Gastrocnemius medialis (tissue), 4 donors: ENCODE measurements at regions of chr6 and their contacts with region 1.

Region 1: DNA sequence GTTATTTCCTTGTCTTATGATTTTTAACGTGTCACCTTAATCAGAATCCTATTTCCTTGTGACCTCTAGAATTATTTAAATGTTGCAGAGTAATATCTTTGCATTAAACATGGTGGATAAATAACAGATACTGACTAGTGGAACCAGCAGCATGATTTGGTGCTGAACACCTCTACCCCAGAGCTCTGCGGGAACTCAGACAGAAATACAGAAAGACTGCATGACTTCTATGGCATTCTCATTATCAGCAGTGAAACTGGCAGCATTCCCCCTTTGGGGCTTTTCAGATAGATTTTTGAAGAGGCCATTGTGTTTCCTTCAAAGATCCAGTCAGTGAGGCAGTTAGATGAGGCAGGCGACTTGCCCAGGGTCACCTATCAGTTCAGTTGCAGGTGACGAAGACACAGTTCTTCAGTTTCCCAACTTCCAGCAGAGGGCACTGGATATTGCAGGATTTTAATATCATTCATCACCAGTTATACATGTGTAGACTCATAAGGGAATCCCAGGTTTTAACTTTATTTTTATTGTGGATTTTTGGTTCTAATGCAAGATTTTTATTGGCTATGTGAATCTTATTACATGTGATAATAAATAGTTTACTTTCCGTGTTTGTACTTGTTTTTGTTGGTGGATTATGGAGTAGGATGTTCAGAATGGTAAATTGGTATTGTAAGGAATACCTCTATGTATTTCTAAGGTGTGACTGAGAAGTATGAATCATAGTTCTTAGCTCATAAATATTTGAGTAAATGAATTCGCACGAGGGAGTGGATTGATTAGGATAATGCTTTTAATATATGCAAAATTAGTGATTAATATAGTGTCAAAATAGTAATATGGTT is 81.3 kb downstream of the AFDN start:
- DNase-seq: no peak
- ATAC-seq: no peak
- H3K4me3 ChIP-seq: peak overlapping the region in 2 of 4 donors; percentile 28 to 33
- H3K27ac ChIP-seq: peak overlapping the region in 3 of 4 donors; percentile 64 to 68 (median 67)
- H3K4me1 ChIP-seq: peaks cover 0 to 10% of the 10 kb centered on the region in 2 donors
- H3K27me3 ChIP-seq: no peaks in the 10 kb centered on the region
- CTCF ChIP-seq: peak in 4 of 5 experiments; percentile 23 to 53 (median 36)
- POLR2A ChIP-seq: no peak

Region 2: GRCh38 chr6:167750956-167751386 is 157.1 kb before region 1 on chr6:
- in situ Hi-C with region 1: no loop called
- intact Hi-C with region 1: loop called (anchors 5 kb)
- DNase-seq: peak; percentile 47 to 68
- ATAC-seq: peak; percentile 82 to 98
- H3K4me3 ChIP-seq: no peak overlapping the region
- H3K27ac ChIP-seq: peak overlapping the region in 2 of 4 donors; percentile 63 to 75
- H3K4me1 ChIP-seq: peaks cover 7 to 12% of the 10 kb centered on the region in 2 donors
- H3K27me3 ChIP-seq: peaks cover 0 to 5% (median 0%) of the 10 kb centered on the region in 3 donors
- CTCF ChIP-seq: no peak
- POLR2A ChIP-seq: no peak

Region 3: GRCh38 chr6:167826230-167826895 is 81.7 kb before region 1 on chr6:
- in situ Hi-C with region 1: no loop called
- intact Hi-C with region 1: loop called (anchors 10 kb)
- DNase-seq: peak; percentile 49 to 50
- ATAC-seq: peak; percentile 69 to 81
- H3K4me3 ChIP-seq: peak overlapping the region; percentile 63 to 81 (median 79)
- H3K27ac ChIP-seq: peak overlapping the region in 3 of 4 donors; percentile 38 to 58 (median 56)
- H3K4me1 ChIP-seq: peaks cover 21% of the 10 kb centered on the region in 2 donors
- H3K27me3 ChIP-seq: no peaks in the 10 kb centered on the region
- CTCF ChIP-seq: peak; percentile 33 to 60 (median 49)
- POLR2A ChIP-seq: no peak

Region 4: DNA sequence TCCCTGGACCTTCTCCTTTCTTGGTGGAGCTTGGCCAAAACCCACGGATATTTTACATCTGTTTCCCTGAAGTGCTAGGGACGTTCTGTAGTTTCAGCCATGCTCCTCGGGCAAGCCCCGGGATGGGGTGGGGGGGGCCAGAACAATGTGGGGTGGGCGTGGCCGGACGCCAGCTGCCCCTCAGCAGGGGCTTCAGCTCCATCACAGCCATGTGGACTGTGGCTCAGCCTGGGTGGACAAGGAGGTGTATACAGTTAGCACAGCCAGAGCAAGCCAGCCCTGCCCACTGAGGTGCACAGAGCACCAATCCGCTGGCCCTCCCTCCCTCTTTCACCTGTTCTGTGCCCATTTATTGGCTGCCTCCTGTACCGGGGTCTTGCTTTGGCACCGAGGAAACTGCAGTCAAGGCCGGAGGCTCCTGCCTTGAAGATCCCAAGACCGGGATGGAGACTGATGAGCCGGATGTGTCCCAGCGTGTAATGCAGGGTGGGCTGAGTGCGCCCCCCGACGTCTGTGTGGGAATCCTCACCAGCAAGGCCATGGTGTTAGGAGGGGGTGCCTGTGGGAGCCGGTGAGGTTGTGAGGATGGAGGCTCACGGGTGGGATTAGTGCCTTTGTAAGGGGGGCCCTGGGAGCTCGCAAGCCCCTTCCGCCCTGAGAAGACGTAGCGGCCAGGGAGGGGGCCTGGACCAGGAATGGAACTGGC is 143.0 kb after region 1 on chr6:
- in situ Hi-C with region 1: no loop called
- intact Hi-C with region 1: loop called (anchors 10 kb)
- DNase-seq: no peak
- ATAC-seq: no peak
- H3K4me3 ChIP-seq: no peak overlapping the region
- H3K27ac ChIP-seq: no peak overlapping the region
- H3K4me1 ChIP-seq: peaks cover 19% of the 10 kb centered on the region in 2 donors
- H3K27me3 ChIP-seq: no peaks in the 10 kb centered on the region
- CTCF ChIP-seq: peak in 1 of 5 experiments; percentile 8
- POLR2A ChIP-seq: no peak

Region 5: DNA sequence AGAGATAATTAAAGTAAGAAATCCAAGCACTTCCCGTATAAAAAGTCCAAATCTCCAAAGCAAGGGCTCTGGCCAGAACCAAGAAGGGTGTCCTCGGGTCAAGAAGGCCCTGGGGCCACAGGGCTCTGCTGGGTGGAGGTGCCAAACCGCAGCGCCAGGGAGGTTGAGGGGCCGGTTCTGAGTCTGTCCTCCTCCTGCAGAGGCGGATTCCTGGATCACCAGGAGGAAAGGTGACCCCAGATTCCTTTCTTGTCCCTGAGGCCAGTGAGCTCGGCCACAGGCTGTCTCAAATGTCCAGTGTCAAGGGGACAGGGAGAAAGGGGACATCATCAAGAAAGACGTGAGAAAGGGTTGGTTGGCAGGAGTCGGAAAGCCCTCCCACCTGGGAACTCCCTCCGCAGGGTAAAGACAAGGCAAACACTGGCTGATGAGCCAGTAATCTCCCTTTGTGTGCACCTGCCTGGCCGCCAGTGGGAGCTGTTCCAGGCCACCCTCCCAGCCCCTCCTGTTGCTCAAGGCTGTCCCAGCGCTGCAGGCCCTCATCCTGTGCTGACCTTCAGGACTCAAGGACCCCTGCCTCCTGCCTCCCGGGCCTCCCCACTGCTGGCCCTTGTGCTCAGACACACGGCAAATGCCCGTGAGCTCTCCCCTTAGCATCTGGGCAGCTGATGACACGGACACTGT is 163.4 kb after region 1 on chr6:
- in situ Hi-C with region 1: no loop called
- intact Hi-C with region 1: no loop called
- DNase-seq: no peak
- ATAC-seq: no peak
- H3K4me3 ChIP-seq: no peak overlapping the region
- H3K27ac ChIP-seq: no peak overlapping the region
- H3K4me1 ChIP-seq: no peaks in the 10 kb centered on the region
- H3K27me3 ChIP-seq: no peaks in the 10 kb centered on the region
- CTCF ChIP-seq: no peak
- POLR2A ChIP-seq: no peak

Region 6: GRCh38 chr6:168117942-168118341 is 209.9 kb after region 1 on chr6:
- in situ Hi-C with region 1: loop called in 1 of 4 experiments (anchors 25 kb)
- intact Hi-C with region 1: no loop called
- DNase-seq: no peak
- ATAC-seq: no peak
- H3K4me3 ChIP-seq: no peak overlapping the region
- H3K27ac ChIP-seq: no peak overlapping the region
- H3K4me1 ChIP-seq: no peaks in the 10 kb centered on the region
- H3K27me3 ChIP-seq: no peaks in the 10 kb centered on the region
- CTCF ChIP-seq: peak in 2 of 5 experiments; percentile 27 to 30
- POLR2A ChIP-seq: no peak

Region 7: GRCh38 chr6:168132531-168133167 is 224.6 kb after region 1 on chr6:
- in situ Hi-C with region 1: loop called in 1 of 4 experiments (anchors 25 kb)
- intact Hi-C with region 1: loop called (anchors 5 kb)
- DNase-seq: peak; percentile 25 to 35
- ATAC-seq: peak; percentile 68 to 83
- H3K4me3 ChIP-seq: peak overlapping the region; percentile 34 to 51 (median 44)
- H3K27ac ChIP-seq: peak overlapping the region in 1 of 4 donors; percentile 34
- H3K4me1 ChIP-seq: peaks cover 5 to 6% of the 10 kb centered on the region in 2 donors
- H3K27me3 ChIP-seq: no peaks in the 10 kb centered on the region
- CTCF ChIP-seq: peak in 4 of 5 experiments; percentile 42 to 64 (median 46)
- POLR2A ChIP-seq: no peak